Tibial artery (tissue), 4 donors: ENCODE measurements at regions of chr15 and their contacts with region 1.

Region 1: GRCh38 chr15:65077981-65078352 is 1.4 kb downstream of the KBTBD13 start:
- DNase-seq: peak; percentile 57 to 88
- H3K4me3 ChIP-seq: peak overlapping the region in 1 of 2 donors; percentile 0
- H3K27ac ChIP-seq: peak overlapping the region; percentile 75 to 95
- H3K4me1 ChIP-seq: peaks cover 4 to 78% (median 43%) of the 10 kb centered on the region in 4 donors
- H3K27me3 ChIP-seq: no peaks in the 10 kb centered on the region
- CTCF ChIP-seq: peak; percentile 57 to 59

Region 2: DNA sequence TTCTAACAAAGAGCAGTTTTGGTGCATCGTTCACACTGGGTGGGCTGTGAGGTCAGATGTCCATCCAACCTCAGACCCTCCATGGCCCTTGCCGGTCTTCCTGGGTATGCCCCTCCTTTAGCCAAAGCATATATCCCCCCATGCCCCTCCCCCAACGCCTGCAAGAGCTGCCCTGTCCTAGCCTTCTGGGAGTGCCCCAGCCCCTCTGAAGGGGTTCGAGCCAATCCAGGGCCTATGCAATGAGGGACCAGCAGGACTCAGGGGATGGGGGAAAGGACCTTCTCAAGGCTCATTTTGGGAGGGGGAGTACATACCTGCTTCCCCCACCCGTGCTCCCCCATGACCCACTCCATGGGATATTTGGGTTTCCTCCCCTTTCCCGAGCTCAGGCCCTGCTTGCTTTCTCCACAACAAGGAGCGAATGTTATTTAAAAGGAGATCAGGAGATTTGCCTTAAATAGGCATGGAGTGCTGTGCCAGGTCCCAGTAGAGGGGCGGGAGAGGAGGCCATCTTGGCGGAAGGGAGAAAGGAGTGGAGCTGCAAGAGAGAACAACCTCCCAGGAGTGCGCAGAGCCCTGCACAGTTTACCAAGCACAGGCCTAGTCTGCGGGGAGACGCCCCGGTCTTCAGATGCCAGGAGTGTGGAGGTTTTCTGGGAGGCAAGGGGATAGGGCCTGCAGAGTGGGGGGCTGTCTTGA is 270.8 kb before region 1 on chr15:
- intact Hi-C with region 1: no loop called
- DNase-seq: peak in 1 of 2 donors; percentile 75
- H3K4me3 ChIP-seq: no peak overlapping the region
- H3K27ac ChIP-seq: peak overlapping the region; percentile 67
- H3K4me1 ChIP-seq: peaks cover 0 to 28% (median 0%) of the 10 kb centered on the region in 4 donors
- H3K27me3 ChIP-seq: no peaks in the 10 kb centered on the region
- CTCF ChIP-seq: no peak

Region 3: DNA sequence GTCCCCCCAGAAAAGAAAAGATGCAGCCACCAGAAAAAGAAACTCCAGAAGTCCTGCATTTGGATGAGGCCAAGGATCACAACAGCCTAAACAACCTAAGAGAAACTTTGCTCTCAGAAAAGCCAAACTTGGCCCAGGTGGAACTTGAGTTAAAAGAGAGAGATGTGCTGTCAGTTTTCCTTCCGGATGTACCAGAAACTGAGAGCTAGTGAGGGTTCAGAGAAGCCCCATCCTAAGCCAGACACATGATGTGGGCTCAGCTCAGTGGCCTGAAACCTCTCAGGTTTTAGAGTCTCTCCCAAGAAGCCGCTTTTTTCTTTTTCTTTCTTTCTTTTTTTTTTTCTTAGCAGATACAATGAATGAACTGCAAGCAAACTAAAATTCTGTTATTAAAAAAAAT is 25.0 kb before region 1 on chr15:
- intact Hi-C with region 1: loop called (anchors 2 kb)
- DNase-seq: peak in 1 of 2 donors; percentile 11
- H3K4me3 ChIP-seq: no peak overlapping the region
- H3K27ac ChIP-seq: peak overlapping the region; percentile 95 to 99
- H3K4me1 ChIP-seq: peaks cover 0 to 89% (median 47%) of the 10 kb centered on the region in 4 donors
- H3K27me3 ChIP-seq: no peaks in the 10 kb centered on the region
- CTCF ChIP-seq: no peak

Region 4: GRCh38 chr15:65275728-65276126 is 197.8 kb after region 1 on chr15:
- intact Hi-C with region 1: no loop called
- DNase-seq: no peak
- H3K4me3 ChIP-seq: no peak overlapping the region
- H3K27ac ChIP-seq: no peak overlapping the region
- H3K4me1 ChIP-seq: peaks cover 0 to 8% (median 0%) of the 10 kb centered on the region in 4 donors
- H3K27me3 ChIP-seq: no peaks in the 10 kb centered on the region
- CTCF ChIP-seq: no peak